ENCODE measurements at regions of chr6 and their contacts with region 1.

Region 1: GRCh38 chr6:157756708-157757429 is 66.2 kb upstream of the SNX9 start:
- DNase-seq: peak; percentile 64
- CTCF ChIP-seq: peak; percentile 67

Region 2: DNA sequence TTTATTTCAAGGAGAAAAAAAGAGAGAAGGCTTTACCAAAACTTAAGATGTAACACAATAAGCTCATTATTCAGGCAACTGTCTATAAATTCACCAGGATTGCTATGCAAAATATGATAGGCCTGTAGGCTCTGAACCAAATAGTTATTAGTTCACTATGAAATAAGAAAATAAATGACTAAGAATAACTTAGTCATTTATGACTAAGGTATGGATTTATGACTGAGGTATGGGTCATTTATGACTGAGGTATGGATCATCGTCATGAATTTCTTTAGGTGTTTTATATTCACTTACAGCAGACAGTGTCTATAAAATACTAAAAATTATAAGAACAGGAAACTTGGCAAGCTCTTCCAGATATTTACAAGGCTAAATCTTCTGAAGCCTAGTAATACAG is 14.1 kb after region 1 on chr6:
- CTCF ChIA-PET with region 1: interaction called, 21 read pairs
- POLR2A ChIA-PET with region 1: no interaction called
- DNase-seq: no peak
- CTCF ChIP-seq: no peak

Region 3: GRCh38 chr6:157946865-157947532 is 190.1 kb after region 1 on chr6:
- CTCF ChIA-PET with region 1: interaction called, 31 read pairs
- POLR2A ChIA-PET with region 1: no interaction called
- DNase-seq: peak; percentile 66
- CTCF ChIP-seq: peak; percentile 84

Measured in GM10248 (cell line).